ENCODE measurements at regions of chr6 and their contacts with region 1.

Region 1: DNA sequence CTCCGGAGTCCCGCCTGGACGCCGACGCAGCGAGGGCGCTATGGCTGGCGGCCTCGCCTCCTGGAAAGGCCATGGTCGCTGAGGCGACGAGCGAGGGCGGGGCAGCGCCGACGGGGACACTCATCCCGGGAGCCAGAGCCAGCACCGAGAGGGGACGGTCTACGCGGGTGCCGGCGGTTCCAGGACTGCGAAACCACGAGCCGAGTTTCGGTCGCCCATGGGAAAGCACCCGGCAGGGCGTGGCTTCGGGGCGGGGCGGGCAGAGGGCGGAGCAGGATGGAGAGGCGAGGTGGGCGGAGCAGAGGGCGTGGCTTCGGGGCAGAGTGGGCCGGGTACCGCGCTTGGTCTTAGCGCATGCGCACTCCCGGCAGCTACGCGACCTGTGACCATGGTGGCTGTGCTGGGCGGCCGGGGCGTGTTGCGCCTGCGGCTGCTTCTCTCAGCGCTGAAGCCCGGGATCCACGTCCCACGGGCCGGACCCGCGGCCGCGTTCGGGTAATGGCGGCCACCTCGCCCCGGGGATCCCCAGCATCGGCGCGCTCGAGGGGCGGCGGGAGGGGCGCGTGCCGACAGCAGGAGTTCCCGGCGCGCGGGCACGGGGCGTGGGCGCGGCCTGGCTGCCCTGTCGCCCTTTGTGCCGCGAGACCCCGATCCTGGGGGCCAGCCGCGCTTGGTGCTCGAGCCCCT is at the start of gene BPHL:
- DNase-seq: peak; percentile 98 to 99
- ATAC-seq: peak; percentile 98 to 99 (median 99)
- H3K4me3 ChIP-seq: peak within 1 kb of the TSS; percentile 63 to 96 (median 79)
- H3K27ac ChIP-seq: peak within 1 kb of the TSS; percentile 75 to 96 (median 90)
- H3K4me1 ChIP-seq: peaks cover 0 to 18% (median 12%) of the 10 kb centered on the region in 9 donors
- H3K27me3 ChIP-seq: no peaks in the 10 kb centered on the region
- CTCF ChIP-seq: peak in 2 of 9 donors; percentile 9 to 23
- total RNA-seq, gene BPHL: 14.5 to 44.4 (median 21.0) TPM

Region 2: DNA sequence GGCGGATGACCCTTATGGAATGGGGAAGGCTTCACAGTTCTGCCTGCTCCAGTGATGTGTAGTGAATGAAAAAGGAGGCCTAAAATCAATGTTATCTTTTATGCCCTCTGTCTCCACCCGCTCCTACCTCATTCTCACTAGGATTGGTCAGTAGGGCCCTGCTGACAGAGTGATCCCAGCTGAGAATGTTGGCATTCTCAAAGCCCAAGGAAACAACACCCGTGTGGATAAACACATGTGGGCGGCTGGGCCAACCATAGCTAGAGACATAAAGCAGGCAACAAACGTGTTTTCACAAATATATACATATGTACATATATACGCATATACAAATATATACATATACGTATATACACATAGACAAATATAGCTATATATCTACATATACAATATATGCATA is 45.7 kb before region 1 on chr6:
- intact Hi-C with region 1: loop called in 3 of 10 experiments (anchors 5 kb)
- DNase-seq: no peak
- ATAC-seq: no peak
- H3K4me3 ChIP-seq: no peak overlapping the region
- H3K27ac ChIP-seq: no peak overlapping the region
- H3K4me1 ChIP-seq: peaks cover 7 to 64% (median 32%) of the 10 kb centered on the region in 9 donors
- H3K27me3 ChIP-seq: no peaks in the 10 kb centered on the region
- CTCF ChIP-seq: no peak

Region 3: GRCh38 chr6:3356056-3356761 is 237.7 kb after region 1 on chr6:
- intact Hi-C with region 1: loop called in 1 of 10 experiments (anchors 10 kb)
- DNase-seq: peak; percentile 59 to 69
- ATAC-seq: peak; percentile 62 to 81 (median 76)
- H3K4me3 ChIP-seq: peak overlapping the region in 9 of 10 donors; percentile 25 to 54 (median 49)
- H3K27ac ChIP-seq: peak overlapping the region; percentile 80 to 94 (median 89)
- H3K4me1 ChIP-seq: peaks cover 0 to 32% (median 25%) of the 10 kb centered on the region in 9 donors
- H3K27me3 ChIP-seq: no peaks in the 10 kb centered on the region
- CTCF ChIP-seq: no peak

Measured in heart right ventricle (tissue), 16 donors.